ENCODE measurements at regions of chr19 and their contacts with region 1.

Region 1: DNA sequence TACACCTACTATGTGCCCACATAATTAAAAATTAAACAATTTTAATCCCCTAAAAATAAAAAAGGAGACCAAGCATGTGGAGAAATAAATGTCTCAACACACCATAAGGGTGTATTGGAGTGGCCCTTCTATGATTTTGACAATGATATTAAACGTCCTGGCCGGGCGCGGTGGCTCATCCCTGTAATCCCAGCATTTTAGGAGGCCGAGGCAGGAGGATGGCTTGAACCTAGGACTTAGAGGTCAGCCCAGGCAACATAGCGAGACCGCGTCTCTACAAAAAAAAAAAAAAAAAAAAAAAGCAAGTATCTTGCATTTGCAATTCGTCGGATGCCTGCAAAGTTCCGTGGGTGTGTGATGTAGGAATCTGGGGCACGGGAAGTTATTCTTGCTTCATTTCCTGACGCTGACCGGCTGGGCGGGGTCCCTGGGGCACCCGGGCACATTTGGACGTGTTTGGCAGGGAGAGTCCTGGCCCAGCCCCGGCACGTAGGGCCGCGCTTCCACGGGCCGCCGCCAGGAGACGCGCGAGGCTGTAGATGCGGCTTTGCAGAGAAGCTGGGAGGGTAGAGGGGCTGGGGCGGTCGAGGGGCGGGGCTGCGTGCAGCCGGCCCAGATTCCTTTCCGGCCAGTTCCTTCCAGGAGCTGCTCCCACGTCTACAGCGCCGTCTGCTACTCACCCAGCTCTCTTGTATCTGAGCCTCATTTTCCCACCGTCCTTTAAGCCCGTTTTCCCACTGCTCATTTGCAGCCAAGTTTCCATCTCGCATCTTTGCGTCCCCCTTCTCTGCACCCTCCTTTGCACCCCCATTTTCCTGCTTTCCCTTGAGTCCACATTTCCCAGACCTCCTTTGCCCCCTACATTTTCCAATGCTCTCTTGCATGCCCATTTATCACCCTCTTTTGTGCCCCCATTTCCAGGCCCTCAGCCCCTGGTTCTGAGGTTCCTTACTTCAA is 2.2 kb upstream of the TSPAN16 start:
- DNase-seq: peak; percentile 89
- ATAC-seq: peak; percentile 99
- H3K4me3 Mint-ChIP-seq: peak overlapping the region; percentile 38
- H3K27ac Mint-ChIP-seq: no peak overlapping the region
- H3K4me1 Mint-ChIP-seq: peaks cover 2% of the 10 kb centered on the region
- H3K27me3 Mint-ChIP-seq: peaks cover 27% of the 10 kb centered on the region

Region 2: GRCh38 chr19:11346092-11346940 is 52.6 kb after region 1 on chr19 and contains the starts of genes CCDC159 and TMEM205:
- CTCF ChIA-PET with region 1: interaction called, 3 read pairs
- POLR2A ChIA-PET with region 1: no interaction called
- intact Hi-C with region 1: loop called in 1 of 2 experiments (anchors 2 kb)
- DNase-seq: peak; percentile 99
- ATAC-seq: peak; percentile 99
- H3K4me3 Mint-ChIP-seq: peak within 1 kb of the TSS; percentile 83
- H3K27ac Mint-ChIP-seq: peak within 1 kb of the TSS; percentile 82
- H3K4me1 Mint-ChIP-seq: peaks cover 23% of the 10 kb centered on the region
- H3K27me3 Mint-ChIP-seq: no peaks in the 10 kb centered on the region
- total RNA-seq, gene CCDC159: 15.3 to 18.0 TPM
- total RNA-seq, gene TMEM205: 28.0 to 32.6 TPM

Region 3: GRCh38 chr19:11405846-11406643 is 112.3 kb after region 1 on chr19:
- CTCF ChIA-PET with region 1: interaction called, 3 read pairs
- POLR2A ChIA-PET with region 1: no interaction called
- intact Hi-C with region 1: loop called in 1 of 2 experiments (anchors 1 kb)
- DNase-seq: peak; percentile 81
- ATAC-seq: peak; percentile 88
- H3K4me3 Mint-ChIP-seq: no peak overlapping the region
- H3K27ac Mint-ChIP-seq: no peak overlapping the region
- H3K4me1 Mint-ChIP-seq: peaks cover 4% of the 10 kb centered on the region
- H3K27me3 Mint-ChIP-seq: peaks cover 6% of the 10 kb centered on the region

Region 4: DNA sequence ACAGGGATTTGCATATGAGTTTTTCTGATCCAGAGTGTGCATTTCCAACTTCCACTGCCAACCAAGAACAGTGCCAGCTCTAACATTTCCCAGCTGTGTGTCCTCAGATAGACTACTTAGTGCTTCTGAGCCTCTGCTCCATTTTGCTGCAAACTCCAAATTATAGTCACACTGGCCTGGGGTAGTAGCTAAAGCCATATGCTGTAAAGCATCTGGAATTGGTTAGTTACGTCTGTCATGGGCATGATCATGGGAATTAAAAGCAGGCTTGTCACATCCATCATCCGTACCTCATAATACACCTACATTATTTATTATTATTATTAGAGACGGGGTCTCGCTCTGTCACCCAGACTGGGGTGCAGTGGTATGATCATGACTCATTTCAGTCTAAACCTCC is 180.0 kb after region 1 on chr19:
- CTCF ChIA-PET with region 1: no interaction called
- POLR2A ChIA-PET with region 1: no interaction called
- intact Hi-C with region 1: no loop called
- DNase-seq: no peak
- ATAC-seq: no peak
- H3K4me3 Mint-ChIP-seq: no peak overlapping the region
- H3K27ac Mint-ChIP-seq: no peak overlapping the region
- H3K4me1 Mint-ChIP-seq: no peaks in the 10 kb centered on the region
- H3K27me3 Mint-ChIP-seq: peaks cover 4% of the 10 kb centered on the region

Region 5: DNA sequence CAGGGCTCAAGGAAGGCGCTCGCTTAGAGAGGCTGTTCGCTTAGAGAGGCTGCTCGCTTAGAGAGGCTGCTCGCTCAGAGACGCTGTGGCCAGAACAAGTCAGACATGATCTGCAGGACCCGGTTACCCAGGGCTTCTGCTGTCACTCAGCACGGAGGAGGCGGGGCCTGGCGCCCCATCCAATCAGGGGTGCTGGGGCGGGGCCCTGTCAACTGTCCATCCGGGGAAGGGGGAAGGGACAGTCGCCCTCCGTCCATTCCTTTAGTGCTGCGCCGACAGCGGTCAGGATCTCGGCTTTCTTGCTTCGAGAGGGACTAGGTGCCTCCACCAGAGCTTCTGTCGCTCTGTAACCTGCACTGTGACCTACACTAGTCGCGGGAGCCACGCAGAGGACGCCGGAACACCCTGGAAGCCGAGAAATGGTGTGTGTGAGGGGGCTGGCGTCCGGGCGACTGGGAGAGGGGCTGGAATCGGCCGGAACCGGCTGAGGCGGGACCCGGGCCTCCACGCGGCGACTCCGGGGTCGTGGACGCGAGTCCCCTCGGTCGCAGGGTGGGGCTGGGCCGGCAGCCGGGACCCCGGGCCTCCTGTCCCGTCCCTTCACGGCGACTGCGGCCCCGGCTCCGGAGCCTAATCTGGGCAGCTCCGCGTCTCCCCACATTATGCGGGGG is 520.5 kb after region 1 on chr19 and contains the start of gene ZNF440:
- CTCF ChIA-PET with region 1: no interaction called
- POLR2A ChIA-PET with region 1: no interaction called
- intact Hi-C with region 1: no loop called
- DNase-seq: peak; percentile 95
- ATAC-seq: peak; percentile 100
- H3K4me3 Mint-ChIP-seq: peak within 1 kb of the TSS; percentile 89
- H3K27ac Mint-ChIP-seq: peak within 1 kb of the TSS; percentile 73
- H3K4me1 Mint-ChIP-seq: peaks cover 20% of the 10 kb centered on the region
- H3K27me3 Mint-ChIP-seq: no peaks in the 10 kb centered on the region
- total RNA-seq, gene ZNF440: 7.0 to 7.7 TPM